Naive thymus-derived CD4-positive, alpha-beta T cell (primary cell): ENCODE measurements at regions of chr6 and their contacts with region 1.

Region 1: DNA sequence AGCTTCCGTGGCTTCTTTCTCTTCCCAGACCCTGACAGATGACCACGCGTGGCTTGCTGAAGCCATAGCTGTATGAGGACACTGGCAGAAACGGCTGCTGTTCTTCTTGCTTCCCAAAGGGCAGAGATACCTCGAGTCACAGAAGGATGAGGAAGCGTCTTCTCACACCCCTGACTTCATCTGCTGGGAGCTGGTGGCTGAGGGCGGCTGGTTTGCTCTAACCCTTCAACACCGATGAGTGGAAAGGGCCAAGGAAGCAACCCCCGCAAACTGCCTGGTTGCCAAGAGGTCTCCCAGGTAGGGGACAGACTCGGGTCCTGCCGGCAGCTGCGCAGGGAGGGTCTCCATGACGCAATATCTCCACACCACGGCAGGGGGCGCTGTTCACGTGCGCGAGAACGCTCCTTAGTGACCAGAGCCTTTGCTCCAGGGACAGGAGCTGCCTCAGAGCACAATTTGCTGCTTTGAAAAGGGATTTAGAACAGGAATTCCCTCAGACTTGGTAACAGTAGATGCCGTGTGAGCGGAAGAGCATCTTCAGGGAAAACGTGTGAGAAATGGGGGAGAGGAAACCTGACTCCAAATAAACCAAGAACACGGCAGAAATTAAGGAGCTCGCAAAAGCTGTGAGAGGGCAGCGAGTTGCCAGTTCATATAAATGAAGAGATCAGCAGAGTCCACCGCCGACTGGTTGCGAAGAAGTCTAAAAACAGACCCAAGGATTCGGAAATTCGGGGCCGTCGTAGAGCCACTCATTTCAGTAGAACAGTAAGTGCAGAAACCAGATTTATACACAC is 80.2 kb downstream of the ERMARD start:
- DNase-seq: peak; percentile 34 to 73 (median 62)
- ATAC-seq: peak; percentile 76
- H3K4me3 ChIP-seq: no peak overlapping the region
- H3K4me3 Mint-ChIP-seq: no peak overlapping the region
- H3K27ac ChIP-seq: no peak overlapping the region
- H3K27ac Mint-ChIP-seq: peak overlapping the region in 1 of 9 donors; percentile 21
- H3K4me1 ChIP-seq: no peaks in the 10 kb centered on the region
- H3K4me1 Mint-ChIP-seq: peaks cover 0 to 8% (median 4%) of the 10 kb centered on the region in 7 donors
- H3K27me3 ChIP-seq: no peaks in the 10 kb centered on the region
- H3K27me3 Mint-ChIP-seq: peaks cover 41 to 59% (median 47%) of the 10 kb centered on the region in 5 donors

Region 2: DNA sequence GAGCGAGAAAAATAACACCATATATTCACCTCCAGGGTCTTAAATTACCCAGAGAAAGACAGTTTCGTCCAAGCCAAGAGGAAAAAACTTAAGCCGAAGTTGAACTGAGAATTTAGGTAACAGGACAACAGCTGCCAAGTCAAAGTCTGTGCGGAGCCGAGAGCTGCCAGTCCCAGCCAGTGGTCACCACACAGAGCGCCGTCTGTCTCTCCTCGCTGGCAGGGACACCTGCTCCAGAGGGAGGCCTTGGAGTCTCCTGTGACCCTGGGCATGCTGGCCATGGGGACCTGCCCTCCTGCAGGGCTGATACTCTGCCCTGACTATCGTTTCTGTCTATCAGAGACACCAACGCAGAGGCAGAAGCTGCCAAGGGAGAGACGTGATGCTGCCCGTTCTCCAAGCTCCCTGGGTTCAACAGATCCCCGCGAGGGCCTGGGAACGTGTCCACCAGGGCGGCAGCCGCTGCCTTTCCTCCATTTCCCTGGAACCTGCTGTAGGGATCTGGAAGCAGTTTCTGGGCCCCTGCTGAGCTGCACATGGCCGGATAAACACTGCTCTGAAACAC is 1049.4 kb before region 1 on chr6:
- CTCF ChIA-PET with region 1: no interaction called
- POLR2A ChIA-PET with region 1: no interaction called
- intact Hi-C with region 1: no loop called
- DNase-seq: no peak
- ATAC-seq: no peak
- H3K4me3 ChIP-seq: no peak overlapping the region
- H3K4me3 Mint-ChIP-seq: no peak overlapping the region
- H3K27ac ChIP-seq: no peak overlapping the region
- H3K27ac Mint-ChIP-seq: no peak overlapping the region
- H3K4me1 ChIP-seq: no peaks in the 10 kb centered on the region
- H3K4me1 Mint-ChIP-seq: no peaks in the 10 kb centered on the region
- H3K27me3 ChIP-seq: no peaks in the 10 kb centered on the region
- H3K27me3 Mint-ChIP-seq: peaks cover 0 to 40% (median 9%) of the 10 kb centered on the region in 5 donors

Region 3: GRCh38 chr6:169813969-169814368 is 17.7 kb before region 1 on chr6:
- CTCF ChIA-PET with region 1: no interaction called
- POLR2A ChIA-PET with region 1: no interaction called
- intact Hi-C with region 1: no loop called
- DNase-seq: no peak
- ATAC-seq: no peak
- H3K4me3 ChIP-seq: no peak overlapping the region
- H3K4me3 Mint-ChIP-seq: no peak overlapping the region
- H3K27ac ChIP-seq: no peak overlapping the region
- H3K27ac Mint-ChIP-seq: no peak overlapping the region
- H3K4me1 ChIP-seq: peaks cover 0 to 8% of the 10 kb centered on the region in 2 donors
- H3K4me1 Mint-ChIP-seq: peaks cover 0 to 12% (median 9%) of the 10 kb centered on the region in 7 donors
- H3K27me3 ChIP-seq: peaks cover 0 to 2% of the 10 kb centered on the region in 2 donors
- H3K27me3 Mint-ChIP-seq: peaks cover 16 to 74% (median 31%) of the 10 kb centered on the region in 5 donors

Region 4: GRCh38 chr6:169933839-169934698 is 102.4 kb after region 1 on chr6:
- CTCF ChIA-PET with region 1: interaction called, 5 read pairs
- POLR2A ChIA-PET with region 1: no interaction called
- intact Hi-C with region 1: loop called in 1 of 2 experiments (anchors 5 kb)
- DNase-seq: no peak
- ATAC-seq: no peak
- H3K4me3 ChIP-seq: no peak overlapping the region
- H3K4me3 Mint-ChIP-seq: no peak overlapping the region
- H3K27ac ChIP-seq: no peak overlapping the region
- H3K27ac Mint-ChIP-seq: no peak overlapping the region
- H3K4me1 ChIP-seq: no peaks in the 10 kb centered on the region
- H3K4me1 Mint-ChIP-seq: no peaks in the 10 kb centered on the region
- H3K27me3 ChIP-seq: no peaks in the 10 kb centered on the region
- H3K27me3 Mint-ChIP-seq: peaks cover 0 to 23% (median 9%) of the 10 kb centered on the region in 5 donors

Region 5: DNA sequence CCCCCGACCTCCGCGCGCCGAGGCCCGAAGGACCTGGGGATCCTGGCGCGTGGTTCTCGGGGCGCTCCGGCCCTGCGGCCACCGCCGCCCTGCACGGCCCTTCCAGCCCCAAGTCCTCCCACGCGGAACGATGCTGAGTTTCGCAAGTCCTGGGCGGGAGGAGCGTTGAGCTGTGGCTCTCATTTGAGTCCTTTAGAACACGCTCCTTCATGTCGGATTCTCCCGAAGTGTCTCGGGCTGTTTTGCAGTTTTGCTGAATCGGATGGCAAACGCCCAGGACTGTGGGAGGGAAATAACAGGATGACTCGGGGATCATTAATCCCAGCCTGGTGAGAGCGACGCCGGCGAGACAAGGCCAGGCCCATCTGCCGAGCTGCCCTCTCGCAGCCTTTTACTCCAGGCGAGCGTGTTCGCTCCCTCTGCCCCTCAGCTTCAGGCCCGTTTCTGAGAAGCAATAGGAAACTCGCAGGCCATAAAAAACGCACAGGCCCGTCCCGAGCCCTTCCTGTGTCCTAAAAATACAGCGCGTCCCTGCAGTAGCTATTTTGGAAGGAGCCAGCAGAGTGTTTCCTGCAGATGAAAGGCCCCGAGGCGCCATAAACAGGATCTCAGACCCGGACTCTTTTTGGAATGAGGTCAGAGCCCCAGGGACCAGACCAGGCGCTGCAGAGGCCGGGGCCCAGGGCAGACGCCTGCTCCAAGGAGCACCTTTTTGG is 305.7 kb after region 1 on chr6:
- CTCF ChIA-PET with region 1: no interaction called
- POLR2A ChIA-PET with region 1: no interaction called
- intact Hi-C with region 1: no loop called
- DNase-seq: no peak
- ATAC-seq: no peak
- H3K4me3 ChIP-seq: no peak overlapping the region
- H3K4me3 Mint-ChIP-seq: no peak overlapping the region
- H3K27ac ChIP-seq: no peak overlapping the region
- H3K27ac Mint-ChIP-seq: no peak overlapping the region
- H3K4me1 ChIP-seq: no peaks in the 10 kb centered on the region
- H3K4me1 Mint-ChIP-seq: no peaks in the 10 kb centered on the region
- H3K27me3 ChIP-seq: no peaks in the 10 kb centered on the region
- H3K27me3 Mint-ChIP-seq: peaks cover 0 to 9% (median 0%) of the 10 kb centered on the region in 5 donors

Region 6: DNA sequence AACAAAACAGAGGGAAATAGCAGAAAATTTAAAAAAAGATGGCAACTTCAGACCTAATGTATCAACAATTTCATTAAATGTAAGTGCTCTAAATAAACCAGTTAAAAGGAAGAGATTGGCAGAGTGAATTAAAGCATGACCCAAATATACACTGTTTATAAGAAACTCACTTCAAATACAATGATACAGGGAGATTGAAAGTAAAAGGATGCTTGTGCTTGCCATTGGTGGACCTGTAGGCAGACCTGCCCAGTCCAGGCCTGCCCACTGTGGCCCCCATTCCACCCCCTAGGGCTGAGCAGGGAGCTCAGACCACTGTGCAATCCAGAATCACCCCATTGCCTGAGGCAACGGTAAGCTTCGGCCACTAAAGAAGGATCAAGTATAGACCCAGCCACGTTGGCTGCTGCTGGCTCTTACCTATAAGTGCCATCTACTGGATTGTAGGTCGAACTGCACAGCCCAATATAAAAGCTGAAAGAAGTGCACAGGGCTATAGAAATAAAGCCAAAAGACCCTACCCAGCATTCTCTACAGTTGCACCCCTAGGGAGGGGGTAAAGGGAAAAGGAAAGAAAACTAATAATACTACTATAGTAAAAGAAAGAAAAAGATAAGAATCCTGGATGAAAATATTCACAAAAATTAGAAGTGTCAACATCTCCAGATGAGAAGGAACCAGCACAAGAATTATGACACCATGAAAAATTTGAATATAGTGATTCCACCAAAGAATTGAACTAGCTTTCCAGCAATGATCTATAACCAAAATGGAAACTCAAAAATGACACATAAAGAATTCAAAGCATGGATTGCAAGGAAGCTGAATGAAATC is 685.4 kb after region 1 on chr6:
- CTCF ChIA-PET with region 1: interaction called, 18 read pairs
- POLR2A ChIA-PET with region 1: no interaction called
- intact Hi-C with region 1: loop called (anchors 1 kb)
- DNase-seq: peak; percentile 9 to 56 (median 45)
- ATAC-seq: peak; percentile 90
- H3K4me3 ChIP-seq: peak overlapping the region; percentile 45
- H3K4me3 Mint-ChIP-seq: peak overlapping the region in 8 of 10 donors; percentile 35 to 78 (median 60)
- H3K27ac ChIP-seq: no peak overlapping the region
- H3K27ac Mint-ChIP-seq: peak overlapping the region in 1 of 9 donors; percentile 13
- H3K4me1 ChIP-seq: peaks cover 0 to 3% of the 10 kb centered on the region in 2 donors
- H3K4me1 Mint-ChIP-seq: peaks cover 0 to 2% (median 0%) of the 10 kb centered on the region in 7 donors
- H3K27me3 ChIP-seq: no peaks in the 10 kb centered on the region
- H3K27me3 Mint-ChIP-seq: peaks cover 12 to 70% (median 40%) of the 10 kb centered on the region in 5 donors

Region 7: DNA sequence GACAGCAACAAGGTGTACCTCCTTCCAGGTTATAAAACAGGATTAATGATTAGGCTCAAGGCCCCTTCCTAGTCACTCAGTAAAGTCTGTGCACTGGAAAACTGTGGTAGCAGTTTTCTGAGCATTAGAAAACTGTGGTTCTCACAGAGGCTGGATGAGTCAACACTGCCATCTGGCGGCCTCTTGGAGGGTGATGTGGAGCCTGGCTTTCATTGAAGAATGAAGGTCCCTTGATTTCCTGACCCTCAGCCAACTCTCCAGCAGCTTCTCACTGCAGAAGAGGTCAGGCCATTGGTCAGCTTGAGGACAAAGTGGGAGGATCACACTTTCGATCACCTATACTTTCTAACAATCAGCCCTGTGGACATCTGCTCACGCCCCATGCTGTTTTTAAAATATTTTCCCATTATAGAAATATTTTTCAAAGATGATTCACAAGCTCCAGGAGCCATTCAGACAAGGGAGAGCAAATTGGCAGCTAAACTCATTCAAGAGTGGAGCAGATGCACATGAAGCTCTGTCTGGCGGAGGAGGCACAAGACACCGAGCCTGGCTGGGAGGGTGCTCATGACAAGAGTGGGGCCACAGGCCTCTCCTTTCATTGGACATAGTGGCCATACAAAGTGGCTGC is 698.3 kb after region 1 on chr6:
- CTCF ChIA-PET with region 1: interaction called, 5 read pairs
- POLR2A ChIA-PET with region 1: no interaction called
- intact Hi-C with region 1: loop called (anchors 1 kb)
- DNase-seq: peak; percentile 33 to 64 (median 51)
- ATAC-seq: peak; percentile 90
- H3K4me3 ChIP-seq: no peak overlapping the region
- H3K4me3 Mint-ChIP-seq: no peak overlapping the region
- H3K27ac ChIP-seq: no peak overlapping the region
- H3K27ac Mint-ChIP-seq: peak overlapping the region in 4 of 9 donors; percentile 8 to 51 (median 26)
- H3K4me1 ChIP-seq: no peaks in the 10 kb centered on the region
- H3K4me1 Mint-ChIP-seq: peaks cover 0 to 8% (median 0%) of the 10 kb centered on the region in 7 donors
- H3K27me3 ChIP-seq: no peaks in the 10 kb centered on the region
- H3K27me3 Mint-ChIP-seq: peaks cover 0 to 7% (median 0%) of the 10 kb centered on the region in 5 donors